ENCODE measurements at regions of chr7 and their contacts with region 1.

Region 1: DNA sequence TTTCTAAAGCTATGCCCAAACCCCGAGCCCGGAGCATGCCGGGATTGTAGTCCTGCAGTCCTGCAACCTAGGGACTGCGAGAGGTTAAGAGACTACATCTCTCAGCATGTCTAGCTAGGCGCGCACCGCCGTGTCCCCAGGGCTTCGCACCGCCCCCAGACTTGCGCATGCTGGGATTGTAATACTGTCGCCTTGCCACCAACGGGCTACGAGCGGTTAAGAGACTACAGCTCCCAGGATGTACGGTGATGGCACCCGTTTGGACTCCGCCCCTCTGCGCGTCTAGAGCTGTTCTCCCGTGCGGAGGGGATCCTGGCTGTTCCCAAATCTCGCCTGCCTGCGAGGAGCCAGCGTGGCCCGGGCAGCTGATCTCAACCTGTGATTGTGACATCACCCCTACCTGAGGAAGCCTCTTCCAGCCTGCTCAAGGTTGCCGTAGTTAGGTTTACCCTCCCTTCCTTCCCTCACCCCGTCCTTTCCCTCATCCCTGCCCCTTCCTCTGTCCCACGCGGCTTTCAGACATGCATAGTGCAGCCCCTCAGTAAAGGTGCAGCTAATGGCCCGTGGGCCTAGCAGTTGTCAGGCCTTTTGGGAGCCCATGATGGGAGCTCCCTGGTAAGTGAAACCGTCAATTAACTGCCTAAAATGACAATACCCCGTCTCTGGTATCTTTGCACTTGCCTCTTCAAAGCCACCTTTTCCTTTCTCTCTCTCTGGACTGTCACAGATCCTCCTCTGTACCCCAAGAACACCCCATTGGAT is 6.3 kb upstream of the ZNF736 start:
- DNase-seq: peak; percentile 96
- ATAC-seq: peak; percentile 94
- H3K4me3 ChIP-seq: peak overlapping the region; percentile 55 to 87 (median 75)
- H3K4me3 Mint-ChIP-seq: peak overlapping the region; percentile 90
- H3K27ac ChIP-seq: peak overlapping the region; percentile 82 to 92
- H3K27ac Mint-ChIP-seq: peak overlapping the region; percentile 88
- H3K4me1 ChIP-seq: peaks cover 24 to 30% of the 10 kb centered on the region in 2 donors
- H3K4me1 Mint-ChIP-seq: peaks cover 37% of the 10 kb centered on the region
- H3K27me3 ChIP-seq: no peaks in the 10 kb centered on the region
- H3K27me3 Mint-ChIP-seq: no peaks in the 10 kb centered on the region
- CTCF ChIP-seq: no peak

Region 2: DNA sequence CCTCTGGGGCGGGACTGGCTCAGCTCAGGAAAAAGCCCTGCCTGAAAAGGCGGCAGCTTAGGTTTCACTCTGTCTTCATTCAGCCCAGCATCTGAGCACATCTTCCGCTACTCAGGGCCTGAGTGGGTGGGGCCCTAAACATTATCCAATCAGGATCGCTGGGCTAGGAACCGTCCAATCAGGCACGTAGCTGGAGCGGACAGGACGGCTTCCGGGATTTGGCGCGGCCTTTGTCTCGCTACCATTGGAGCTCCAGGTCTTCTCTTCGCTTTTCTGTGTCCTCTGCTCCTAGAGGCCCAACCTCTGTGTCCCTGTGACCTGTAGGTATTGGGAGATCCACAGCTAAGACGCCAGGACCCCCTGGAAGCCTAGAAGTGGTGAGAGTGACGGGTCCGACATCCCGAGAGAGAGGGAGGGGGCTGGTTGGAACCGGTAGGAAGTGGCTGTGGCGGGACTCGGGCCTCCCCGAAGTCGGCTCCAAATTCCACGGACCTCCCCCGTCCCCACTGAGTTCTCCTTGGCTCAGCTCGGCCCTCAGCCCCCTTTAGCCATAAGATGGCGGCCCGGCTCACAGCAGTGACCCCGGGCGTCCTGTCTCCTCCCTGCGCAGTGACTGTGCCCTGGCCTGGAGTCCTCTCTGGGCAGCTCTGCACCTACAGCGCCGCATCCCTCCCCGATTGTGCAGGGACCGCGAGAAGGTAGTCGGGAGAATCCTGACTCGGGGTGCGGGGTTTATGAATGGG is 156.4 kb after region 1 on chr7:
- CTCF ChIA-PET with region 1: no interaction called
- POLR2A ChIA-PET with region 1: interaction called, 3 read pairs
- intact Hi-C with region 1: loop called (anchors 2 kb)
- DNase-seq: peak; percentile 64
- ATAC-seq: peak; percentile 96
- H3K4me3 ChIP-seq: peak overlapping the region in 3 of 5 experiments; percentile 47 to 53 (median 51)
- H3K4me3 Mint-ChIP-seq: peak overlapping the region; percentile 72
- H3K27ac ChIP-seq: no peak overlapping the region
- H3K27ac Mint-ChIP-seq: peak overlapping the region; percentile 26
- H3K4me1 ChIP-seq: no peaks in the 10 kb centered on the region
- H3K4me1 Mint-ChIP-seq: peaks cover 2% of the 10 kb centered on the region
- H3K27me3 ChIP-seq: no peaks in the 10 kb centered on the region
- H3K27me3 Mint-ChIP-seq: no peaks in the 10 kb centered on the region
- CTCF ChIP-seq: no peak